ENCODE measurements at regions of chr11 and their contacts with region 1.

Region 1: DNA sequence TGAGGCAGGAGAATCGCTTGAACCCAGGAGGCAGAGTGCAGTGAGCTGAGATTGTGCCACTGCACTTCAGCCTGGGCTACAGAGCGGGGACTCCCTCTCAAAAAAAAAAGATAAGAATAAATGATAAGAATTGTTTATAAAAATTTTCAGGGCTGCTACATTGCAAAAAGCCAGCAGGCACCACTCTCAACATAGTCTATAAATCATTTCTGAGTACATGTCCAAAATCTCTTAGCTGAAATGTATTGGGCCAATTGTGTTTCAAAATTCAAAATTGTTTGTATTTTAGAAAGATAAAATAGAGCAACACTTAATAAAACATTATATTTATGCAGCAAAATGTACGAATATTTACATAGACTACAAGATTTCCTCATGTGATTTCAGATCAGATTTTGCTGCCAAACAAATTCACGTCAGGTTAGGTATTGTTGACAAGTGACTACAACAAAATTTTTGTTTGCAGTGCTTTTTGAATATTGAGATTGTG is 13.9 kb downstream of the PGR start:
- DNase-seq: no peak
- ATAC-seq: no peak
- H3K4me3 ChIP-seq: no peak overlapping the region
- H3K27ac ChIP-seq: no peak overlapping the region
- H3K4me1 ChIP-seq: no peaks in the 10 kb centered on the region
- H3K27me3 ChIP-seq: no peaks in the 10 kb centered on the region

Region 2: DNA sequence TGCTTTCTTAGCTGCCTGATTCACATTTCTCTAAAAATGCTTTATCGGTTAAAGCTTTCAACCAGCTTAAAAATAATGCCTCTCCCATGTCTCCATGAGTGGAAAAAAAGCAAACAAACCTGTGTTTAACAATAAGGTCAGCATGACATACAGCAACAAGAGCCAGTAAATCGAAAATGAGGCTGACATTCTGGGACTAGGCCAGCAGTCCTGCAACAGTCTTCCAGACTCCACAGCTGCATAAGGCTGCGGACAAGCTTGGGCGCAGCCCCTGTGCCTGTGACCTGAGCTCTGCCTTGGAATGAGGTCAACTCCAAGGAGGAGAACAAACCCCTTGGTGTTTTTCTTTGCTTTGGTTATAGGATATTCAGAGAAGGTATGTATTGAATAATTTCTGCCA is 81.6 kb before region 1 on chr11:
- intact Hi-C with region 1: loop called in 1 of 4 experiments (anchors 10 kb)
- DNase-seq: peak; percentile 70 to 89 (median 84)
- ATAC-seq: peak; percentile 91 to 94
- H3K4me3 ChIP-seq: peak overlapping the region; percentile 25
- H3K27ac ChIP-seq: peak overlapping the region; percentile 56
- H3K4me1 ChIP-seq: no peaks in the 10 kb centered on the region
- H3K27me3 ChIP-seq: no peaks in the 10 kb centered on the region

Region 3: GRCh38 chr11:101215069-101215468 is 99.4 kb after region 1 on chr11:
- intact Hi-C with region 1: no loop called
- DNase-seq: no peak
- ATAC-seq: no peak
- H3K4me3 ChIP-seq: no peak overlapping the region
- H3K27ac ChIP-seq: no peak overlapping the region
- H3K4me1 ChIP-seq: no peaks in the 10 kb centered on the region
- H3K27me3 ChIP-seq: no peaks in the 10 kb centered on the region

Measured in right cardiac atrium (tissue), 5 donors.